Breast epithelium (tissue), 4 donors: ENCODE measurements at regions of chr5 and their contacts with region 1.

Region 1: DNA sequence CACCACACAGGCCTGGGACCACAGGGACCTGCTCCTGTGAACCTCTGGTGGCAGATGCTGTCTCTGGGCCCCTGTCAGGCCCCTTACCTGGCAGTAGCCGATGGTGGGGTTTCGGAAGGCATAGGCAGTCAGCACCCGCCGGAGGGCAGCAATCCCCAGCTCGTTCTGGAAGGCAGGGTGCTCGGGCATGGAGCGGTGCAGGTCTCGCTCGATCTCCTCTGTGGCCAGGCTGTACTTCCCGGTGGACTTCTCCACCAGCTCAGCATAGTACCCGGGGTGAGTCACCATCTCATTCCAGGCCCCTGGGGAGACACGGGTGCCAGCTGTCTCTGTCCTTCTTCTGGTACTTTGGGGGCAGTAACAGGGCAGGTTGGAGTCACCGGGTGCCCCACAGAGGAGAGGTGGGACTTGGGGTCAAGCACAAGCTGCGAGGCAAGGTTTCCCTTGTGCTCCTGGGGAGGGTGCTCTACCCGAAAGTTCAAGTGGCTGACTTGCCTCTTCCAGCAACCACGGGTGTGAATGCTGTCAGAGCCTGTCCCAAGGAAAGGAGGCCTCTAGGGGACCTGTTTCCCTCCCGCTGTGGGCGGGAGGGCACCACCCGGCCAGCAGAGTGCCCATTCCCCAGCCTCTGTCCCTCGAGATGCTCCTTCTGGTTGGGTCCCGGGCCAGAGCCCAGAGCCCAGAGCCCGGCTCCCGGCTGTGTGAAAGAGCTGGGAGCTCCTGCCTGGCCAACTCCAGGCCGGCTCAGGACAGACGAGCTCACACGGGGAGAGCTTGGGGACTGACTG is 19.8 kb upstream of the MRNIP start:
- DNase-seq: peak in 1 of 2 donors; percentile 34
- H3K4me3 ChIP-seq: no peak overlapping the region
- H3K27ac ChIP-seq: no peak overlapping the region
- H3K4me1 ChIP-seq: no peaks in the 10 kb centered on the region
- H3K27me3 ChIP-seq: no peaks in the 10 kb centered on the region
- CTCF ChIP-seq: no peak
- POLR2A ChIP-seq: no peak

Region 2: GRCh38 chr5:178688551-178688950 is 1189.9 kb before region 1 on chr5:
- intact Hi-C with region 1: loop called (anchors 5 kb)
- DNase-seq: no peak
- H3K4me3 ChIP-seq: no peak overlapping the region
- H3K27ac ChIP-seq: no peak overlapping the region
- H3K4me1 ChIP-seq: no peaks in the 10 kb centered on the region
- H3K27me3 ChIP-seq: no peaks in the 10 kb centered on the region
- CTCF ChIP-seq: no peak
- POLR2A ChIP-seq: no peak

Region 3: DNA sequence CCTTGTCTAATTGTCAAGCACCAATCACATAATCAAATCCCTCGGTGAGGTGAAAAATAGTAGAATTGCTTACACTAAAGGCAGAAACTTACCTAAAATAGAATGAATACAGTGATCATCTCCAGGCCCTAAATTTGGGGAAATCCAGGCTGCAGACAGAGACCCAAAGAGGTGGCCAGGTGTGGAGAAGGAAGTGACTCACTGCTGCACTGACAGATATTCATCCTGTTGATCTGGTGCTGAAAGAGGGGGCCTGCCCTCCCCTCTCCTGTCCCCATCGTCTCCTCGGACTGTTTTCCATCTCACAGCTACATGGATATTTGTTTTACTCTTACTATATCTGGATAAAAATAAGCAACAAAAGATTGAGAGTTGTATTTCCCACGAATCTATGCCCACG is 845.5 kb after region 1 on chr5:
- intact Hi-C with region 1: no loop called
- DNase-seq: no peak
- H3K4me3 ChIP-seq: no peak overlapping the region
- H3K27ac ChIP-seq: no peak overlapping the region
- H3K4me1 ChIP-seq: no peaks in the 10 kb centered on the region
- H3K27me3 ChIP-seq: no peaks in the 10 kb centered on the region
- CTCF ChIP-seq: no peak
- POLR2A ChIP-seq: no peak